ENCODE measurements at regions of chr2 and their contacts with region 1.

Region 1: DNA sequence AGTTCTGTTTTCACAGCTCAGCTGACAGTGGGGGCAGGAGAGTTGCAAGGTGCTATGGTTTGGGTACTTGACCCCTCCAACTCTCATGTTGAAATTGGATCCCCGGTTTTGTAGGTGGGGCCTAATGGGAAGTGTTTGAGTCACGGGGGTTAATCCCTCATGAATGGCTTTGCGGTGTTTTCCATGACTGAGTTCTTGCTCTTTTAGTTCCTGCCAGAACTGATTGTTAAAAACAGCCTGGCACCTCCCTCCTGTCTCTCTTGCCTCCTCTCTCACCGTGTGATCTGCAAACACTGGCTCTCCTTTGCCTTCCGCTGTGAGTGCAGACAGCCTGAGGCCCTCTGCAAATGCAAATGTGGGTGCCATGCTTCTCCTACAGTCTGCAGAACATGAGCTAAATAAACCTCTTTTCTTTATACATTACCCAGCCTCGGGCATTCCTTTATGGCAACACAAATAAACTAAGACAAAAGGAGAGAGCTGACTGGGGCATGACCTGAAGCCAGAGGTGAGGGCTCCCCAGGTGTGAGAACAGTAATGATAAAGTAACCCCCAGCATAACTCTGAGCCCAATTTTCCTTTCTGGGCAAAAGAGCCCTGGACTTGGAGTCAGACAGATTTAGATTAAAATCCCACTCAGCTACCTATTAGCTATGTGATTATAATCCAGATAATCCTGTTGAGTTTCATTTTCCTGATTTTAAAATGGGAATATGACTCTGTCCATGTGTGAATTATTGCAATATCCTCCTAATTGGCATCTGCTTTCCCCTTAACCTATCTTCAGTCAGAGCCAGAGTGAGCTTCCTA is 64.9 kb upstream of the CAPN13 start:
- DNase-seq: no peak
- ATAC-seq: no peak
- H3K4me3 ChIP-seq: no peak overlapping the region
- H3K27ac ChIP-seq: no peak overlapping the region
- H3K4me1 ChIP-seq: no peaks in the 10 kb centered on the region; the same call in 1 of the 2 replicates
- H3K27me3 ChIP-seq: no peaks in the 10 kb centered on the region
- CTCF ChIP-seq: no peak
- EP300 ChIP-seq: no peak
- POLR2A ChIP-seq: no peak
- RAD21 ChIP-seq: no peak

Region 2: GRCh38 chr2:30862054-30862651 is 10.0 kb before region 1 on chr2:
- CTCF ChIA-PET with region 1: interaction called, 12 read pairs
- POLR2A ChIA-PET with region 1: no interaction called
- RAD21 ChIA-PET with region 1: interaction called, 5 read pairs
- SMC1A ChIA-PET with region 1: interaction called, 5 read pairs
- in situ Hi-C with region 1: no loop called
- intact Hi-C with region 1: no loop called
- DNase-seq: no peak
- ATAC-seq: peak; percentile 84
- H3K4me3 ChIP-seq: no peak overlapping the region
- H3K27ac ChIP-seq: no peak overlapping the region
- H3K4me1 ChIP-seq: peaks cover 14% of the 10 kb centered on the region
- H3K27me3 ChIP-seq: no peaks in the 10 kb centered on the region
- CTCF ChIP-seq: peak; percentile 72 to 92 (median 86)
- EP300 ChIP-seq: no peak
- POLR2A ChIP-seq: no peak
- RAD21 ChIP-seq: peak; percentile 72

Region 3: GRCh38 chr2:30947686-30948085 is 75.5 kb after region 1 on chr2:
- CTCF ChIA-PET with region 1: no interaction called
- POLR2A ChIA-PET with region 1: no interaction called
- RAD21 ChIA-PET with region 1: no interaction called
- SMC1A ChIA-PET with region 1: no interaction called
- in situ Hi-C with region 1: no loop called
- intact Hi-C with region 1: no loop called
- DNase-seq: no peak
- ATAC-seq: no peak
- H3K4me3 ChIP-seq: no peak overlapping the region
- H3K27ac ChIP-seq: no peak overlapping the region
- H3K4me1 ChIP-seq: no peaks in the 10 kb centered on the region
- H3K27me3 ChIP-seq: no peaks in the 10 kb centered on the region
- CTCF ChIP-seq: no peak
- EP300 ChIP-seq: no peak
- POLR2A ChIP-seq: no peak
- RAD21 ChIP-seq: no peak